RWPE1 (cell line): ENCODE measurements at regions of chr1 and their contacts with region 1.

Region 1: DNA sequence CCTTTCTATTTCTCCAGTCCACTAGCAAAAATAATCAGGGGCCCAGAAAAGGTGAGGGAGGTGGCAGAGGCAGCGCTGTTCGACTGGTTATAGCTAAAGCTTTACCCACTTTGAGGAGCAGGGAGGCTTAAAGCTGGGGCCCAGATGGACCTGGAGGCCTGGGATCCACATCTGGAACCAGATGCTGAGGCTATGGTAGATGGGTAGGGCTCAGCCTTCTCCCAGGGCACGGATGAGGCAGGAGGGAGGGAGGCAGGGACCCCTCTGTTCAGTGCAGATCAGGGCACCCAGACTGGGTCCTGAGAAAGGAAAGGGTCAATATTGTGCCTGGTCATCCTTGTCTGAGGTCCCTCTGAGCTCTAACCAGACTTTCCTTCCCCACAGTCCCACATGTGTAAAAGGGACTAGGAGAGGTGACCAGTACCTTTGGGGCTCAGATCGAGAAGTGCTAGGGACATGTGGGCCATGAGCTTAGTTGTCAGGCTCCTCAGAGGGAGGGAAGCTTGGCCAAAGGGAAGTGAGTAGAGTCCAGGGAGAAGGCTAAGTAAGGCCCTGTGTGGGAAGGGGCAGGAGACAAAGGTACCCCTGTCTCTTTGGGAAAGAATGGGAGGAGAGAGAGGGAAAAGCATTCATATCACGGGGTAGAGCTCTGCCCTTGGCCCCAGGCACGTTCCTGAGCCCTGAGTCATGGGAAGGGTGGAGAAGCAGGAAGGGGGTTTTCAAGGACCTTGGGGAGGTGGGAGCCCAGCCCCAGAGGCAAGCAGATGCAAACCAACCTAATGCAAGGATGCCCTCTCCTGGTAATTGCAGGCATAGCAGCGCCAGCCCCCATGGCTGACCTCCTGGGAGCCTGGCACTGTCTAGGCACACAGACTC is 15.4 kb downstream of the LMNA start:
- DNase-seq: peak; percentile 90
- H3K27ac ChIP-seq: peak overlapping the region; percentile 100
- CTCF ChIP-seq: peak; percentile 96

Region 2: GRCh38 chr1:156090822-156091188 is 39.1 kb before region 1 on chr1:
- CTCF ChIA-PET with region 1: interaction called, 57 read pairs
- POLR2A ChIA-PET with region 1: interaction called, 7 read pairs
- DNase-seq: peak; percentile 78
- H3K27ac ChIP-seq: peak overlapping the region; percentile 52
- CTCF ChIP-seq: peak; percentile 80

Region 3: GRCh38 chr1:156114101-156114916 is 15.6 kb before region 1 on chr1 and contains the start of gene LMNA:
- CTCF ChIA-PET with region 1: interaction called, 5 read pairs
- POLR2A ChIA-PET with region 1: interaction called, 12 read pairs
- DNase-seq: peak; percentile 98
- H3K27ac ChIP-seq: peak within 1 kb of the TSS; percentile 100
- CTCF ChIP-seq: no peak

Region 4: GRCh38 chr1:156153363-156153762 is 23.4 kb after region 1 on chr1 and contains the start of gene SEMA4A:
- CTCF ChIA-PET with region 1: no interaction called
- POLR2A ChIA-PET with region 1: no interaction called
- DNase-seq: peak; percentile 87
- H3K27ac ChIP-seq: no peak within 1 kb of the TSS
- CTCF ChIP-seq: no peak

Region 5: DNA sequence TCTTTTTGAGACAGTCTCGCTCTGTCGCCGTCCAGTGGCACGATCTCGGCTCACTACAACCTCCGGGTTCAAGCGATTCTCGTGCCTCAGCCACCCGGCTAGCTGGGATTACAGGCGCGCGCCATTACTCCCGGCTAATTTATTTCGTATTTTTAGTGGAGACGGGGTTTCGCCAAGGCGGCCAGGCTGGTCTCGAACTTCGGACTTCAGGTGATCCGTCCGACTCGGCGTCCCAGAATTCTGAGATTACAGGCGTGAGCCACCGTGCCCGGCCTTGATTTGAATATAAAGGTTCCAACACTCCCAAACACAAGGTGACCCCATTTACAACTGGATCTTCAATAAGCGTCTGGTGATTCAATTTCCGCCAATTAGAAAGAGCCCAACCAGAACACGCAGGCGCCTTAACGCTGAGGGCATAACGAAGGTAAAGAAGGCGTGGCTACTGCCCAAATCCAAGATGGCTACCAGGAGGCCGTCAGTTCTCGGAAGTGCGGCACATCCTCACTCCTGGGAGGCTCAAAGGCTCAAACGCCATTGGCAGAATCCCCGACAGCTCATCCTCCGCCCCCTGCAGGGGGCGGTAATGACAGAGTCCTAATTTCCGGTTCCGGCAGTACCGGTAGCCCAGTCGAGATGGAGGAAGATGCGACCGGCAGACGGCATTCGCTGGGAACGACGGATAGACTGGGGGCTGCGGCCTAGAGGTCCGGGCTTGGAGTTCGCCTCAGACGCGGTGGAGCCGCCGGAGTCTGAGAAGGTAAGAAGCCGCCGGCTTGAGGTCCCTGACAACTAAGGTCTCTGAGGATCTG is 63.8 kb after region 1 on chr1 and contains the start of gene SLC25A44:
- CTCF ChIA-PET with region 1: no interaction called
- POLR2A ChIA-PET with region 1: no interaction called
- DNase-seq: peak; percentile 98
- H3K27ac ChIP-seq: peak within 1 kb of the TSS; percentile 81
- CTCF ChIP-seq: peak; percentile 30